ENCODE measurements at regions of chr14 and their contacts with region 1.

Region 1: DNA sequence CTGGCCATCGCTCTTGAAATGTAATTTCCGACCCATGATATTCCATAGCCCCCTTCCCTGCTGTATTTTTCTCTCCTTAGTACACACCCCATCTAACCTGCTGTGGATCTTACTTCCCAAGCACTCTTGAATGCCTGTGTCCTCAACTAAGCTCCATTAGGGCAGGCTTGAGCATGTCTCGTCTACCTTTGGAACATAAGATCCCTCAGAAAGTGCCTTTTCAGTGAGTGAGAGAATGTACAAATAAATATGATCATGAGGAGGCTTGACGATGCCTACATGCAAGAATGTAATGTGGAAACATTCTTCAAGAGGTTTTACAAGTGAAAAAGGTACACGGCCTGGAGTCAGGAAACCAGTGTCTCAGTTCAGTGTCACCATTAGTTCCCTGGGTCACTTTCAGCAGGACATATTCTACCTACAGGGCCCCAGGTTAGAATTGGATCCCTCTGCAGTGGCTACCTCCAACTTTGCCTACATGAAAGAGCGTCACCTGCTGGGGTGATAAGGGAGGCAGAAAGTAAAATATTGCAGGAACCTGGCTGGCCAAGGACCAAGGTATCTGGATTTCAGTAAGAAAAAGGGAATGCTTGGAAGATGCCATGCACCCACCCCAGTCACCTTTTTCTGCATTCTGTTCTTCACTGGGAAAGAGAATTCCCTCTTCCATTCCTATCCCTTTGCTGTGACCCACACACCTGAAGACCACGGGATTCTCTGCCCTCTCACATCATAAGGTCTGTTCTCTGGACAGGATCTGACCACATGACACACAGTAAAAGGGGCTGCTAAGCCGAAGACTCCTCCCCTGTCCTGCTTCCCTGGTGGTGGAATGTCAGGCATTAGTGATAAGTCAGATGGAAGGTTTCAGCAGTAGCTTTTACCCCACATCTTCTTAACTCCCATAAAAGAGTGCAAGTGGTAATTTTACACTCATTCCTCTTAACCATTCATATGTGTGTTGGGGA is 24.6 kb upstream of the SERPINA1 start:
- DNase-seq: no peak
- ATAC-seq: no peak
- H3K4me3 ChIP-seq: no peak overlapping the region
- H3K4me3 Mint-ChIP-seq: no peak overlapping the region
- H3K27ac ChIP-seq: no peak overlapping the region
- H3K27ac Mint-ChIP-seq: no peak overlapping the region
- H3K4me1 ChIP-seq: no peaks in the 10 kb centered on the region
- H3K4me1 Mint-ChIP-seq: peaks cover 0 to 1% (median 0%) of the 10 kb centered on the region in 7 donors
- H3K27me3 ChIP-seq: no peaks in the 10 kb centered on the region
- H3K27me3 Mint-ChIP-seq: peaks cover 14 to 40% (median 26%) of the 10 kb centered on the region in 5 donors

Region 2: DNA sequence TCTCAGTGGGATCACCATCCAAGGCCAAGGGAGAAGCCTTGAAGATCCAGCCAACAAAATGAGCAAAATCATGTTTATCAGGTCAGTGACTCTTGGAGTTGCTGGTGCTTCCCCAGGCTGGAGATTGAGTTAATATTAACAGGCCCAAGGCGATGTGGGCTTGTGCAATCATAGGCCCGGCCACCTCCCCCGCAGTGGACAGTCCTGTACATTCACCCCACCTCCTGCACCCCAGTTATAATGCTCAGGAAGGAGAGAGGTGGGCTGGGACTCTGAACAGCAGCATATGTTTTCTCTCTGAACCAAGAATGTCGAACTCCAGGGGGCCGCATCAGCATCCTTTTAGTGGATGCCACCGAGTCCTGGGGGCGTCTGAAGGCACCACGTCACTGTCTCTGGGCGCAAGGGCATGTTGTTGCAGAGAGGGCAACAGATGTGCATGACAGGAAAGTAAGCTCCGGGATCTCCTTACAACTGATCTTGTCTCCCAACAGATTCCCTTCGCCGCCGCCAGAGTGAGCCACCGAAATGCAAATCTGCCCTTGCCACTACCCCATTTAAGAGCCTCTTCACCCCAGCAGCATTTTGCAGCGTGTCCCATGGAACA is 57.7 kb before region 1 on chr14:
- CTCF ChIA-PET with region 1: no interaction called
- POLR2A ChIA-PET with region 1: no interaction called
- intact Hi-C with region 1: loop called in 1 of 2 experiments (anchors 2 kb)
- DNase-seq: peak in 1 of 9 donors; percentile 15
- ATAC-seq: no peak
- H3K4me3 ChIP-seq: no peak overlapping the region
- H3K4me3 Mint-ChIP-seq: no peak overlapping the region
- H3K27ac ChIP-seq: no peak overlapping the region
- H3K27ac Mint-ChIP-seq: no peak overlapping the region
- H3K4me1 ChIP-seq: no peaks in the 10 kb centered on the region
- H3K4me1 Mint-ChIP-seq: no peaks in the 10 kb centered on the region
- H3K27me3 ChIP-seq: no peaks in the 10 kb centered on the region
- H3K27me3 Mint-ChIP-seq: peaks cover 26 to 60% (median 39%) of the 10 kb centered on the region in 5 donors